Caco-2 (cell line): ENCODE measurements at regions of chr13 and their contacts with region 1.

Region 1: GRCh38 chr13:70604448-70604847 is 496.2 kb upstream of the KLHL1 start:
- DNase-seq: no peak
- H3K4me3 ChIP-seq: no peak overlapping the region
- H3K4me3 Mint-ChIP-seq: no peak overlapping the region
- H3K27ac Mint-ChIP-seq: no peak overlapping the region
- H3K4me1 ChIP-seq: no peaks in the 10 kb centered on the region
- H3K4me1 Mint-ChIP-seq: no peaks in the 10 kb centered on the region
- H3K27me3 ChIP-seq: no peaks in the 10 kb centered on the region
- H3K27me3 Mint-ChIP-seq: no peaks in the 10 kb centered on the region
- CTCF ChIP-seq: no peak

Region 2: GRCh38 chr13:70534466-70534865 is 70.0 kb before region 1 on chr13:
- CTCF ChIA-PET with region 1: no interaction called
- POLR2A ChIA-PET with region 1: no interaction called
- intact Hi-C with region 1: no loop called
- DNase-seq: no peak
- H3K4me3 ChIP-seq: no peak overlapping the region
- H3K4me3 Mint-ChIP-seq: no peak overlapping the region
- H3K27ac Mint-ChIP-seq: no peak overlapping the region
- H3K4me1 ChIP-seq: peaks cover 19% of the 10 kb centered on the region
- H3K4me1 Mint-ChIP-seq: no peaks in the 10 kb centered on the region
- H3K27me3 ChIP-seq: no peaks in the 10 kb centered on the region
- H3K27me3 Mint-ChIP-seq: no peaks in the 10 kb centered on the region
- CTCF ChIP-seq: no peak

Region 3: DNA sequence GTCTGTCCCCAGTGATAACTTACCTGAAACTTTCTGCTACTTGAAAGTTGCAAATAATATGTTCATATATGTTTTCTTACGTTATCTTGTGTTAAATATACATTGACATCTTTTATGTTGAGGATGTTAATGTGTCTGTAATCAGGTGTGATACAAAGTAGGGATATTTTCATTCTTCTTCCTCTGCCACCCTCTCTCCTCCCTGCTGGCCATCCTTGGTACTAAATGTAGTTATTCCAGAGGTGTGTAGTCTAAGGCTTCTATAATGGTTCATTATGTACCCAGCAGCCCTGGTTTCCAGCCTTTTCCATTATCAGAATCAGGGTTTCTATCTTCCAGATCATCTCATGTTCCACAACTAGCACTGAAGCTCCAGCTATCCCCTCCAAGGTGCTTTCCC is 110.5 kb after region 1 on chr13:
- CTCF ChIA-PET with region 1: no interaction called
- POLR2A ChIA-PET with region 1: interaction called, 11 read pairs
- intact Hi-C with region 1: no loop called
- DNase-seq: no peak
- H3K4me3 ChIP-seq: no peak overlapping the region
- H3K4me3 Mint-ChIP-seq: no peak overlapping the region
- H3K27ac Mint-ChIP-seq: no peak overlapping the region
- H3K4me1 ChIP-seq: no peaks in the 10 kb centered on the region
- H3K4me1 Mint-ChIP-seq: no peaks in the 10 kb centered on the region
- H3K27me3 ChIP-seq: no peaks in the 10 kb centered on the region
- H3K27me3 Mint-ChIP-seq: no peaks in the 10 kb centered on the region
- CTCF ChIP-seq: peak in 1 of 2 experiments; percentile 24

Region 4: GRCh38 chr13:71030784-71031183 is 426.3 kb after region 1 on chr13:
- CTCF ChIA-PET with region 1: no interaction called
- POLR2A ChIA-PET with region 1: no interaction called
- intact Hi-C with region 1: no loop called
- DNase-seq: peak; percentile 72 to 84
- H3K4me3 ChIP-seq: no peak overlapping the region
- H3K4me3 Mint-ChIP-seq: peak overlapping the region; percentile 60
- H3K27ac Mint-ChIP-seq: peak overlapping the region; percentile 87
- H3K4me1 ChIP-seq: peaks cover 28% of the 10 kb centered on the region
- H3K4me1 Mint-ChIP-seq: peaks cover 19% of the 10 kb centered on the region
- H3K27me3 ChIP-seq: no peaks in the 10 kb centered on the region
- H3K27me3 Mint-ChIP-seq: no peaks in the 10 kb centered on the region
- CTCF ChIP-seq: no peak